ENCODE measurements at regions of chr11 and their contacts with region 1.

Region 1: GRCh38 chr11:74492974-74493790 is at the start of gene LIPT2:
- DNase-seq: peak; percentile 98
- ATAC-seq: peak; percentile 94
- H3K4me3 ChIP-seq: peak within 1 kb of the TSS; percentile 32 to 79 (median 75)
- H3K4me3 Mint-ChIP-seq: peak within 1 kb of the TSS; percentile 90
- H3K27ac ChIP-seq: peak within 1 kb of the TSS; percentile 47 to 78
- H3K27ac Mint-ChIP-seq: peak within 1 kb of the TSS; percentile 94
- H3K4me1 ChIP-seq: peaks cover 7 to 14% of the 10 kb centered on the region in 2 donors
- H3K4me1 Mint-ChIP-seq: peaks cover 13% of the 10 kb centered on the region
- H3K27me3 ChIP-seq: no peaks in the 10 kb centered on the region
- H3K27me3 Mint-ChIP-seq: no peaks in the 10 kb centered on the region
- CTCF ChIP-seq: no peak
- total RNA-seq, gene LIPT2: 6.5 and 20.2 TPM in 2 replicates

Region 2: DNA sequence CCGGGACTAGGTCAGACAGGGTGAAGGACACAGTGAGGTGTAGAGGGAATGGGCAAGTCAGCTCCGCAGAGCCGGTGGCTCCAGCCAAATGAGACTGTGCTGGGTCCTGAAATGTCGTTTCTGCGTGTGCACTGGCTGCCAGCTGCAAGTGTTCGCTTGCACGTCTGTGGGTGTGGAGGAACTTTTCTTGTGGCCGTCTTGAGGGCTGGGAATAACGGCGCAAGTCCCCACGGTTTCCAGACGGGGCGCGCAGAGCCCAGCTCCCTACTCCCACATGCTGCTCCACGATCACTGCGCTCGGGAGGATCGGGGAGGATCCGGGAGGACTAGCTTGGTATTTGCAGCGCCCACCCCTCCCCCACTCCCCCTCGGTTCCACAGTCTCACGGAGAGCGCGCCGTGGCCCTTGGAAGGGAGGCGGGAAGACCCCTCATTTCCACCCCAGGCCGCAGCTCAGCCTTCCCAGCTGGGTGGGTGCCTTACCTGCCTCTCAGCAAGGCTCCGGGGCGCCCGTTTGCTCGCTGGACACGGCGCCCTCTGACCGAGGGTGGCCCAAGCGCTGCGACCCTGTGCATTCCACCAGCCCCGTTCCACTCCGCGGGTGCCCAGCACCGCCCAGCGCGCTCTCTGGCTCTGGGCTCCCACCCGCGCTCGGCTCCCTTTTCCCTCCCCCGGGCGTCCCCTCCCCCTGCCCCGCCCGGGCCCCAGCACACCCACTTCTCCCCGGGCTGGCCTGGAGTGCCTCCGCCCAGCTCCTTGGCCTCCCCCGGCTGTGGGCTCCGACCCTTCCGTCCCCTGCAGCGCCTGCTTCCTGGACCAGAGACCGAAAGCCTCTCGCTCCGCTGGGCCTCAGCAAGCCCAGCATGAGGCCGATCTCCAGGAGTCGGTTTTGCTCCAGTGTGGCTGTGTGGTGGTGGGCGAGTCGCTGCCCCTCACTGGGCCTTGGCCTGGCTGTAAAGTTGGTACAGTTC is 26.0 kb before region 1 on chr11 and contains the start of gene KCNE3:
- CTCF ChIA-PET with region 1: no interaction called
- POLR2A ChIA-PET with region 1: no interaction called
- intact Hi-C with region 1: no loop called
- DNase-seq: no peak
- ATAC-seq: no peak
- H3K4me3 ChIP-seq: no peak within 1 kb of the TSS
- H3K4me3 Mint-ChIP-seq: peak within 1 kb of the TSS; percentile 12
- H3K27ac ChIP-seq: no peak within 1 kb of the TSS
- H3K27ac Mint-ChIP-seq: no peak within 1 kb of the TSS
- H3K4me1 ChIP-seq: peaks cover 0 to 4% of the 10 kb centered on the region in 2 donors
- H3K4me1 Mint-ChIP-seq: peaks cover 6% of the 10 kb centered on the region
- H3K27me3 ChIP-seq: peaks cover 0 to 28% (median 17%) of the 10 kb centered on the region in 4 experiments
- H3K27me3 Mint-ChIP-seq: peaks cover 50% of the 10 kb centered on the region
- CTCF ChIP-seq: no peak
- total RNA-seq, gene KCNE3: not detected in 2 replicates

Region 3: DNA sequence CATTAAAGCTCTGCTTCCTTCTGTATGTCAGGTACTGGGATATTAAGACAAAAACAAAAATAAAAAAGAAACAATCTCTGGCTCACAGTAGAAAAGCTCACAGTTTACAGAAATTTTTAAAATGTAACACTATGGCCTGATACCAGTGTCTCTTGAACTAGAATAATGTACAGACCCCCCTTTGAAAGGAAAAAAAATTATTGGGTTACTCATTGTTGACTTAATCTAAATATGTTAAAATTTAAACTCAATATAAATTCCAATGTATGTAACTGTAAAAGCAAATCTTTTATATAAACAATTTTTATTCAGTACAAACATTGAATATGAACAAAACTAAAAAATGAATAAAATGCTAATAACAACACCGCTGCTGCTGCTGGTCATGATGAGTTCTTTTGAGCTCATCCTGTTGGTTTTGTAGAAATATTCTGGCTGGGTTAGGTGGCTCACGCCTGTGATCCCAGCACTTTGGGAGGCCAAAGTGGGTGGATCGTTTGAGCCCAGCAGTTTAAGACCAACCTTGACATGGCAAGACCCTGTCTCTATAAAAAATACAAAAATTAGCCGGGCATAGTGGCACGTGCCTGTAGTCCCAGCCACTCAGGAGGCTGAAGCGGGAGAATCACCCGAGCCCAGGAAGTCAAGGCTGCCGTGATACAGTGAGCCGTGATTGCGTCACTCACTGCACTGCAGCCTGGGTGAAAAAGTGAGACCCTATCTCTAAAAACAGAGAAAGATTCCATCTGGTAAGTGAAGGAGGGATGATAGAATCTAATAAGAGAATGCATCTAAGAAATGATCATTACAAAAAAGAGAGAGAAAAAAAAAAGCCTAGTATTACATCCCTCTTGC is 14.1 kb before region 1 on chr11:
- CTCF ChIA-PET with region 1: no interaction called
- POLR2A ChIA-PET with region 1: no interaction called
- intact Hi-C with region 1: no loop called
- DNase-seq: no peak
- ATAC-seq: no peak
- H3K4me3 ChIP-seq: no peak overlapping the region
- H3K4me3 Mint-ChIP-seq: no peak overlapping the region
- H3K27ac ChIP-seq: no peak overlapping the region
- H3K27ac Mint-ChIP-seq: no peak overlapping the region
- H3K4me1 ChIP-seq: no peaks in the 10 kb centered on the region
- H3K4me1 Mint-ChIP-seq: no peaks in the 10 kb centered on the region
- H3K27me3 ChIP-seq: peaks cover 0 to 2% (median 0%) of the 10 kb centered on the region in 4 experiments
- H3K27me3 Mint-ChIP-seq: peaks cover 12% of the 10 kb centered on the region
- CTCF ChIP-seq: no peak

Region 4: DNA sequence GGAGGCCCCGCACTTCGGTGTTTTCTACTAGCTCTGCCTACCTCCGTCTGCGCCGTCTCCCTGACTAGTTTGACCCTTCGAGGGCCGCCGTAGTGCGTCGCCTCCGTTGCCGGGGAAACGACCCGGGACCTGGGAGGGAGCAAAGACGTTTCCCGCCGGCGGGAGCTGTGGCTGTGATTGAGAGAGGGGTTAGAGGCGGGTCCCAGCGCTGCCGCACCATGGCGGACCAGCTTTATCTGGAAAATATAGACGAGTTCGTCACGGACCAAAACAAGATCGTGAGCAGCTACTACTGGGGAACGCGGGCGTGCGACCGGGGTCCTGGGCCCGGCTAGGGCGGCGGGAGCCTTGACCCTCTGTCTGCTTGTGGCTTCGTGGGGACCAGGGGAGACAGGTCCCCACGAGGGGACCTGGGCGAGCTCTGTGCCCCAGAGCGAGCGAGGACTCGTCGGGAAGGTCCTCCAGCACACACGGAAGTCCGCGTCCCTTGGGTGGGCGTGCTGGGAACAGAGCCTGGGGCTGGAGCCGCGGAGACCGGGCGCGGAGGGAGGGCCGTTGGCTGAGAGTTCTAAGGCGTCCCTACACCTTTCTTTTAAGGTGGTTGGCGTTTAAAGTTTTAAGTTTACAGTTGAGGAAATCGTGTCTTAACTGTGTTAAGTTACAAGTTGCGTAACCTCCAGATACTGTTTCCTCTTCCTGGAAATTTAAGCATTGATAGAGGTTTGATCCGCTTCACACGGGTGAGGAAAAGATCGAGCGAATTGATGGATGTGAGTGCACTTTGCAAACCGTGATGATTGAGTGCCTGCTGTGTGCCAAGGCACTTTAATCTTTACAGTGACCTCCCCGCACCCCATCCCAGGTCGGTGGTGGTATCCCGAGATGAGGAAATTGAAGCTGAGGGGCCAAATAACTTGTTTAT is 99.5 kb after region 1 on chr11 and contains the start of gene POLD3:
- CTCF ChIA-PET with region 1: interaction called, 3 read pairs
- POLR2A ChIA-PET with region 1: interaction called, 10 read pairs
- intact Hi-C with region 1: loop called (anchors 1 kb)
- DNase-seq: peak; percentile 91
- ATAC-seq: peak; percentile 97
- H3K4me3 ChIP-seq: peak within 1 kb of the TSS; percentile 82 to 99 (median 94)
- H3K4me3 Mint-ChIP-seq: peak within 1 kb of the TSS; percentile 100
- H3K27ac ChIP-seq: peak within 1 kb of the TSS; percentile 47 to 84
- H3K27ac Mint-ChIP-seq: peak within 1 kb of the TSS; percentile 97
- H3K4me1 ChIP-seq: peaks cover 10 to 13% of the 10 kb centered on the region in 2 donors
- H3K4me1 Mint-ChIP-seq: peaks cover 21% of the 10 kb centered on the region
- H3K27me3 ChIP-seq: no peaks in the 10 kb centered on the region
- H3K27me3 Mint-ChIP-seq: no peaks in the 10 kb centered on the region
- CTCF ChIP-seq: no peak
- total RNA-seq, gene POLD3: 13.5 and 17.6 TPM in 2 replicates